Transverse colon (tissue), 4 donors: ENCODE measurements at regions of chr18 and their contacts with region 1.

Region 1: DNA sequence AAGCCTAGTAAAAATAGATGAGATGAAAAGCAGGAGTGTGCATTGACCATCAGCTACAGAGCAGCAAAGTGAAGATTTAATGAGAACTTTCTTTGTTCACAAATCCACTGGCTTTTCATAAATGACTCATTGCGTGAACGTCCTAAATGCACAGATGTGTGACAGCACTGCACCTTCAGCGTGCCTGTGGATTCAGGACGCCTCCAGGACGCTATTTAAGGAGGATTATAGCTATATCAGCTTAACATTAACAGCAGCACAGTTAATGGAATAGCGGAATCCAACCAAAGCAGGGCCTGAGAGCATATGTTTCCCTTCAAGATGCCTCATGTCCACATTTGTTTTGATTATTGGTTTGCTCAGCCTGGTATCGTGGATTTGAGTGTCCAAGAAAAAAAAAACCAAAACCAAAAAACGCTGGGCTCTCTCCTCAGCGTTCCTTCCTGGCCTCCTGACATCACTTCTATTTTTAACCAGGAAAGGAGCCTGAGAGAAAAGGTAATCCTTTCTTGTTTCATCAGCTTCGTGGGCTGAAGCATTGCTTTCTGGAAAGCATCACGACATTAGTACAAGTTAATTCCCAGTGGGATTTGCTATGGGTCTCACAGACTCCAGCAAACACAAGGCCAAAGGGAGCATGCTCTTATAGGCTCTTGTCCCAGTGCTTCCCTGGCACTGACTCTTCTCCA is 447.0 kb upstream of the SMIM21 start:
- DNase-seq: no peak
- H3K4me3 ChIP-seq: no peak overlapping the region
- H3K27ac ChIP-seq: peak overlapping the region; percentile 57 to 75 (median 68)
- H3K4me1 ChIP-seq: peaks cover 0 to 8% (median 3%) of the 10 kb centered on the region in 4 donors
- H3K27me3 ChIP-seq: no peaks in the 10 kb centered on the region
- CTCF ChIP-seq: no peak
- EP300 ChIP-seq: no peak
- POLR2A ChIP-seq: no peak

Region 2: DNA sequence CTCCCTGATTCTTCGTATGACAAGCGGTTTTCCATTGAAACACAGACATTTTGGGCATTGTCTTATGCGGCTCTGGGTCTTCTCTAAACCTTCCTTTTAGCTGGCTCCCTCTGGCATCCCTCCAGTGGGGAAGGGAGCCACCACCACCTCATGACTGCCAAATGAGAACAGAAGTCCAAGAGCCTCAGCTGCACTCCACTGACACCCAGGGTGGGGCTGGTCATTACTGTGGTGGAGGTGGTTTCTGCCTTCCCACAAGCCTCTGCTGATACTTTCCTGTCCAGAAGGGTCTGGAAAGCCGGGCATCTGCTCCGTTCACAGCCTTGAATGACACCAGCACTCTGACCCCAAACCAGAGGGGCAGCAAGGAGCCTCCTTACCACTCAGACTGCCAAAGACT is 407.0 kb after region 1 on chr18:
- in situ Hi-C with region 1: no loop called
- intact Hi-C with region 1: no loop called
- DNase-seq: no peak
- H3K4me3 ChIP-seq: no peak overlapping the region
- H3K27ac ChIP-seq: no peak overlapping the region
- H3K4me1 ChIP-seq: no peaks in the 10 kb centered on the region
- H3K27me3 ChIP-seq: no peaks in the 10 kb centered on the region
- CTCF ChIP-seq: no peak
- EP300 ChIP-seq: no peak
- POLR2A ChIP-seq: no peak

Region 3: GRCh38 chr18:76349067-76349715 is 474.6 kb after region 1 on chr18:
- in situ Hi-C with region 1: no loop called
- intact Hi-C with region 1: loop called (anchors 10 kb)
- DNase-seq: peak; percentile 66
- H3K4me3 ChIP-seq: peak overlapping the region in 1 of 4 donors; percentile 7
- H3K27ac ChIP-seq: no peak overlapping the region
- H3K4me1 ChIP-seq: peaks cover 0 to 12% (median 8%) of the 10 kb centered on the region in 4 donors
- H3K27me3 ChIP-seq: no peaks in the 10 kb centered on the region
- CTCF ChIP-seq: peak; percentile 78 to 90 (median 88)
- EP300 ChIP-seq: no peak
- POLR2A ChIP-seq: no peak